Activated CD4-positive, alpha-beta T cell treated with anti-CD3 and anti-CD28 coated beads, Interleukin-2, amount 10 ng/mL, durations not matched to agents 24 days and 14 days (primary cell): ENCODE measurements at regions of chr16 and their contacts with region 1.

Region 1: GRCh38 chr16:70380861-70381603 is 34.3 kb downstream of the DDX19A start:
- DNase-seq: peak; percentile 99
- H3K4me3 Mint-ChIP-seq: peak overlapping the region; percentile 88
- H3K27ac Mint-ChIP-seq: peak overlapping the region; percentile 96
- H3K4me1 Mint-ChIP-seq: peaks cover 5% of the 10 kb centered on the region
- H3K27me3 Mint-ChIP-seq: no peaks in the 10 kb centered on the region

Region 2: GRCh38 chr16:70337814-70338213 is 43.2 kb before region 1 on chr16:
- intact Hi-C with region 1: no loop called
- DNase-seq: no peak
- H3K4me3 Mint-ChIP-seq: no peak overlapping the region
- H3K27ac Mint-ChIP-seq: no peak overlapping the region
- H3K4me1 Mint-ChIP-seq: no peaks in the 10 kb centered on the region
- H3K27me3 Mint-ChIP-seq: no peaks in the 10 kb centered on the region

Region 3: DNA sequence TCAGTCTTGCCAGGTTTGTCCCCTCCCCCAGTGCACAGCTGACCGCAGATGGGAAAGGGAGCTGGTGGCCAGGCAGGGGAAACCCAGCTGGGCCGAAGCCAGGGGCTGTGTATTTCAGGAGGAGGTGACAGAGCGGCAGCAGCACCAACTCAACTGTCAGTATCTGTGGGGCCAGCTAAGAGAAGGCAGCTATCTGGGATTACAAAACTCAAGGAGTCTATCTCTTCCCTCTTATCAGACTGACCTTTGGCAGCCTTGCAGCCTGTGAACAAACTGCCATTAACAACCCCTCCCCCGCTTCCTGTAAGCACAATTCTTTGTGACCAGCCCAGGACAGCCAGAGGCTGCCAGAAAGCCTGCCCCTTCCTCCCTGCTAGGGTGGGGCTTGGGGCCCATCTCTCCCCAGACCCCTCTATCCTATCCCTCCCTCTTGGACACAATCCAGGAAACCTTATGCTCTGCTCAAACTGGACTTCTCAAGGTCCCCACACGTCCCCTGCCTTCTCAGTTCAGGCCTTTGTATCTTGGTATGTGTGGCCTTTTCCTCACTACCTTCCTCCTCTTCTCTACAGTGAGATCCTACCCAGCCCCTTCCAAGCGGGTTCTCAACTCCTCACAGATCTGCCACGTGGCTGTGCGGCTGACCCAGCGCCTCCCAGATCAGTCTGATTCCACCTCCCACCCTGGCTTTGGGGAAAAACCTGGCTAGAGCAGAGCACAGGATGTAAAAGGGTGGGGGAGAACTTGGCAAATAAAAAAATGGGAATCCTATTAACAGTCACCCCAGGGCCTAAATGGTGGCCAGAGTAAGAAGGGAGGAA is 47.4 kb after region 1 on chr16:
- intact Hi-C with region 1: loop called (anchors 2 kb)
- DNase-seq: peak; percentile 83
- H3K4me3 Mint-ChIP-seq: peak overlapping the region; percentile 56
- H3K27ac Mint-ChIP-seq: peak overlapping the region; percentile 67
- H3K4me1 Mint-ChIP-seq: peaks cover 56% of the 10 kb centered on the region
- H3K27me3 Mint-ChIP-seq: no peaks in the 10 kb centered on the region

Region 4: DNA sequence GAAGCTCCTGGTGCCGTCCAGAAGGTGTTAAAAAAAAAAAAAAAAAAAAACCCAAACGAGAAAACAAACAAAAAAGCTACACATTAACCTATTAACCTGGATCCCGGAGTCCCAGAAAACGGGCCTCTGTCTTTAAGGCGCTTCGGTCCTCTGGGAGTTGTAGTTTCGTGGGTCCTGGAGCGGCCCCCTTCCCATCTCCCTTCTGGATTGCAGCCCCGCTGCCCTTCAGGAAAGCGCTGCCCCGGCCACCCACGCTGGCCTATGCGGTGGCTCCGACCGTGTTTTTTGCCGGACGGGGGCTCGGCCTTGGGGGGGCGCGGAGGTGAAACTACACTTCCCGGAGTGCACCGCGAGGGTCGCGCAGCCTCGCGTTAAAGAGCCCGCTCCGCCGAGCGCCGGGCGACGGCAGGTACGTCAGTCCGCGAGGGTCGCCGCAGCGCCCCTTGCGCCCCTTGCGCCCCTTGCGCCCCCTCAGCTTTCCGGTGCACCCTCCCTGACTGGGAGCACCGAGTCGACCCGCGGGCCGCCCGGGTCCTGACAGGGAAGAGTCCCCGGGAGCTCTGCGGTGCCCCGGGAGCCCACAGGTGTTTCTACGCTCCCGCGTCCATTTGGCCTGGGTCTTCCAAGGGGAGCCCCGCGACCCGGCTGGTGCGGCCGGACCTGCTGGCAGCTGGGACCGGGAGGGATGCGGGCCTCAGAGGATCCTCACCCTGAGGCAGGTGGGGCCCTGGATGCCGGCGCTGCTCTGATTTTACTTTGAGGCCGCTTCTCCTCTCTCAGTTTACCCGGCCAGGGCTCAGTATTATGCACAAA is 73.4 kb after region 1 on chr16 and contains the start of gene FCSK:
- intact Hi-C with region 1: loop called (anchors 1 kb)
- DNase-seq: peak; percentile 90
- H3K4me3 Mint-ChIP-seq: peak within 1 kb of the TSS; percentile 85
- H3K27ac Mint-ChIP-seq: peak within 1 kb of the TSS; percentile 88
- H3K4me1 Mint-ChIP-seq: peaks cover 14% of the 10 kb centered on the region
- H3K27me3 Mint-ChIP-seq: peaks cover 1% of the 10 kb centered on the region
- total RNA-seq, gene FCSK: 19.6 and 24.4 TPM in 2 replicates

Region 5: GRCh38 chr16:70523076-70523742 is 142.2 kb after region 1 on chr16 and contains the start of gene COG4:
- intact Hi-C with region 1: loop called (anchors 1 kb)
- DNase-seq: peak; percentile 97
- H3K4me3 Mint-ChIP-seq: peak within 1 kb of the TSS; percentile 92
- H3K27ac Mint-ChIP-seq: peak within 1 kb of the TSS; percentile 96
- H3K4me1 Mint-ChIP-seq: peaks cover 41% of the 10 kb centered on the region
- H3K27me3 Mint-ChIP-seq: no peaks in the 10 kb centered on the region
- total RNA-seq, gene COG4: 38.3 and 42.1 TPM in 2 replicates